ENCODE measurements at regions of chr10 and their contacts with region 1.

Region 1: GRCh38 chr10:94402015-94402842 is at the start of gene TBC1D12:
- DNase-seq: peak; percentile 98
- H3K4me3 ChIP-seq: peak within 1 kb of the TSS; percentile 82 to 97 (median 93)
- H3K27ac ChIP-seq: peak within 1 kb of the TSS; percentile 93 to 97 (median 96)
- H3K4me1 ChIP-seq: peaks cover 16 to 32% (median 23%) of the 10 kb centered on the region in 4 donors
- H3K27me3 ChIP-seq: no peaks in the 10 kb centered on the region
- CTCF ChIP-seq: peak in 1 of 3 experiments; percentile 4
- EP300 ChIP-seq: no peak
- POLR2A ChIP-seq: peak; percentile 47
- total RNA-seq, gene TBC1D12: 16.2 to 22.9 (median 17.7) TPM

Region 2: DNA sequence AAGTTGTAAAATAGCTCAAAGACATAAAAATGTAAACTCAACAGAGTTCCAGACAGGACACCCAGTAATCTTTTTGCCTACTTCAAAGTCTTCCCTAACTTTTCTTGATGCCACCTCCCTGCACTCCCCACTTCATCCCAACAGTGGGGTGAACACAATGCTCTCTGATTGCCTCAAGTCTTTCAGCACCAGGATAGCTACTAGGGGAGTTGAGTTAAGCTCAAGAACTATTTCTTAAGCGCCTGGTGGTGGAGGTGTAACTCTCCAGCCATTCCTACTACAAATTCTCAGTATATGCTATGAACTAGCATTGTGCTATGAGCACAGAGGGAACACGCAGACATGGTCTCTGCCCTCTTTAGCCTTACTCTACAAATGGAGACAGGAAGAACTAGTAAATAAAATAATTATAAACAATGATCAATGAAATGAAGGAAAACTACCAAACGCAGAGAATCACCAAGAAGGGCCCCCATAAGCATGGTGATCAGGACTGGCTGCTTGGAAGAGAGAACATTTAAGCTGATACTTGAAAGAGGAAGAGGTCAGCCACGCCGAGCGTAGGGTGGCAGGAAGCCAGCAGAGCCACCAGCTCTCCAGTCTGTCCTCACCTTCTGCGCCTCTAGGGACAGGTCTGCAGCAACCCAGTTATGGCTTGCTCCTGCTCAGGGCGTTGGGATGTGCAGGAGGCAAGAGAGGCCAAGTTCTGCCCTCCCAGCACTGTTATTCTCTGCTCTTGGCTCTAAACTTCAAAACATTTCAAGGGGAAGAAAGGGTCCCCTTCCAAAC is 683.1 kb before region 1 on chr10:
- intact Hi-C with region 1: no loop called
- DNase-seq: no peak
- H3K4me3 ChIP-seq: no peak overlapping the region
- H3K27ac ChIP-seq: no peak overlapping the region
- H3K4me1 ChIP-seq: no peaks in the 10 kb centered on the region
- H3K27me3 ChIP-seq: peaks cover 0 to 6% (median 0%) of the 10 kb centered on the region in 4 donors
- CTCF ChIP-seq: no peak
- EP300 ChIP-seq: no peak
- POLR2A ChIP-seq: no peak

Region 3: GRCh38 chr10:94205396-94205831 is 196.8 kb before region 1 on chr10:
- intact Hi-C with region 1: no loop called
- DNase-seq: no peak
- H3K4me3 ChIP-seq: no peak overlapping the region
- H3K27ac ChIP-seq: peak overlapping the region in 2 of 4 donors; percentile 29 to 59
- H3K4me1 ChIP-seq: peaks cover 6 to 57% (median 50%) of the 10 kb centered on the region in 4 donors
- H3K27me3 ChIP-seq: no peaks in the 10 kb centered on the region
- CTCF ChIP-seq: no peak
- EP300 ChIP-seq: no peak
- POLR2A ChIP-seq: no peak

Region 4: DNA sequence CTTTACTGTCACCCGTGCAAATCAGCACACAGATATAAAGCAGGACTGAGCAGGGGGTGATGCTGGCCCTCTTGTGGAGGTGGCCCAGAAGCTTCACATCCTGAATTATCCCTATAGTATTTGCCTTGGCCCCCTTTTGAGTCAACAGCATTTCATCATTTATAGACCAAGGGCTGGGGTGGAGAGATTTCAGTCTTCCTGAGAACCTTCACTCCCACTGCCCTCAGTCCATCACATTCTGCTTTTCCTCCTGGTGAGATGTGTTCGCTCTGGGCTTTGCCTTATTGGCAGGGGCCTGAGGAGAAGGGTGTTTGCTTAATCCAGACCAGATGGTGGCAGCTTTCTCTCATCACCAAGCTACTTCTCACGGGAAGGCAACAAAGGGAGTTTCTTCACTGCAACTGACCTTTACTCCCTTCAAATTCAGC is 87.2 kb before region 1 on chr10:
- intact Hi-C with region 1: no loop called
- DNase-seq: no peak
- H3K4me3 ChIP-seq: no peak overlapping the region
- H3K27ac ChIP-seq: peak overlapping the region; percentile 50 to 79 (median 72)
- H3K4me1 ChIP-seq: peaks cover 8 to 51% (median 44%) of the 10 kb centered on the region in 4 donors
- H3K27me3 ChIP-seq: no peaks in the 10 kb centered on the region
- CTCF ChIP-seq: no peak
- EP300 ChIP-seq: no peak
- POLR2A ChIP-seq: no peak

Region 5: GRCh38 chr10:94362360-94363250 is 39.6 kb before region 1 on chr10 and contains the start of gene NOC3L:
- intact Hi-C with region 1: loop called (anchors 5 kb)
- DNase-seq: peak; percentile 98
- H3K4me3 ChIP-seq: peak within 1 kb of the TSS; percentile 69 to 88 (median 78)
- H3K27ac ChIP-seq: peak within 1 kb of the TSS; percentile 69 to 86 (median 82)
- H3K4me1 ChIP-seq: peaks cover 18 to 34% (median 28%) of the 10 kb centered on the region in 4 donors
- H3K27me3 ChIP-seq: no peaks in the 10 kb centered on the region
- CTCF ChIP-seq: peak; percentile 83 to 91 (median 90)
- EP300 ChIP-seq: no peak
- POLR2A ChIP-seq: no peak
- total RNA-seq, gene NOC3L: 18.1 to 23.3 (median 20.7) TPM

Measured in esophagus muscularis mucosa (tissue), 4 donors.